ENCODE measurements at regions of chr2 and their contacts with region 1.

Region 1: DNA sequence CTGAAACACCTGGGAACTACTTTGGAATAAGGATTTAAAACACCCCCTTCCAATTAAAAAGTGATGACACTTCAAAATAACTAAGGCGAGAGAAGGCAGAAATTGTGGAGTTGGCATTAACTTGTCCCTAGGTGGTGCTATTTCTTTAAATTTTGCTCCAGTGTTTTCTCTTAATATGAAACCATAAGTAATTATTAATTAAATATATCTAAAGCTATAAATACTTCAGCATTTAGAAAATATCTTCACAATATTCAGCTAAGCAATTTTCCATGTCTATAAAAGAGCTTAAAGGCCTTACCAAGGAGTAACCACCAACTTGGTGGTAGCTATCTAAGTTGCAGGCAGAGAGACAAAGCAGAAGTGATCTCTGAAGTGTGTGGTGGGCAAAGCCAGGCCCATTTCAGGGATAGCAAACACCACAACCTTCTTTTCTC is 186.8 kb upstream of the PGAP1 start:
- DNase-seq: no peak
- ATAC-seq: peak; percentile 89
- H3K4me3 ChIP-seq: no peak overlapping the region
- H3K27ac ChIP-seq: no peak overlapping the region
- H3K4me1 ChIP-seq: peaks cover 3% of the 10 kb centered on the region; the same call in 1 of the 2 replicates
- H3K27me3 ChIP-seq: no peaks in the 10 kb centered on the region
- CTCF ChIP-seq: peak; percentile 38 to 62 (median 48)
- EP300 ChIP-seq: no peak
- POLR2A ChIP-seq: no peak
- RAD21 ChIP-seq: peak; percentile 65

Region 2: GRCh38 chr2:196941398-196942078 is 171.8 kb before region 1 on chr2:
- CTCF ChIA-PET with region 1: no interaction called
- POLR2A ChIA-PET with region 1: no interaction called
- RAD21 ChIA-PET with region 1: no interaction called
- SMC1A ChIA-PET with region 1: no interaction called
- in situ Hi-C with region 1: no loop called
- intact Hi-C with region 1: no loop called
- DNase-seq: no peak
- ATAC-seq: no peak
- H3K4me3 ChIP-seq: no peak overlapping the region
- H3K27ac ChIP-seq: no peak overlapping the region
- H3K4me1 ChIP-seq: no peaks in the 10 kb centered on the region; the same call in 1 of the 2 replicates
- H3K27me3 ChIP-seq: no peaks in the 10 kb centered on the region
- CTCF ChIP-seq: no peak
- EP300 ChIP-seq: no peak
- POLR2A ChIP-seq: no peak
- RAD21 ChIP-seq: no peak

Region 3: DNA sequence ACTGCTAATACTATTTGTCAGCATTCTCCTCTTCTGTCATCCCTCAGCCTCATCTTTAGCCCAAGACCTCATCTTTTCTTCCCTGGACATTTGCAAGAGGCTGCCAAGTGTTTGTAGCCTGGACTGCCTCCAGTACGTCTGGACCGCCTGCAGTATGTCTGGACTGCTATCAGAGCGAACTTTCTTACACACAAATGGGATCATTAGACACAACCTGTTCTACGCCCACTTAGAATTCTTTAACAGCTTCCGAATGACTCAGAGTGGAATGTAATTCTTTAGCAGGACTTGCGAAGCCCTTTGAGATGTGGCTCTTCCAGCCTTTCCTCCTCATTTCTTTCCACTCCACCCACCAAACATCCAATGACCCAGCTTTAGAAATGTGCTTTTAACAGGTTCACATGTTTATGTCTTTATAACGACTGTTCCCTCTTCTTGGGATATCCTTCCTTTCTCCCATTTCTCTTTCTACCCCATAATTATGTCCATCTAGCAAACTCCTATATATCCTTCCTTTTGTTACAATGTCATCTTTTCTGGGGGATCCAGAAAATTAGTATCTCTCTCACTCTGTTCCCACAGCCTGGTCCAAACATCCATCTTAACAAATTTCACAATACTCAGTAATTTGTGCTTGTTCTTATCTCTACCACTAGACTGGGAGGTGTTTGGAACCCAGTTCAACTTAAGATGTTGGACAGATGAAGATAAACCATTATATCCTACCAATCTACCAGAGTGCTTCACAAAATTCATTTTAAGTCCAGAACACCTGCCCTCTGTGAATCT is 15.5 kb before region 1 on chr2:
- CTCF ChIA-PET with region 1: interaction called, 12 read pairs
- POLR2A ChIA-PET with region 1: no interaction called
- RAD21 ChIA-PET with region 1: interaction called, 7 read pairs
- SMC1A ChIA-PET with region 1: interaction called, 7 read pairs
- in situ Hi-C with region 1: no loop called
- intact Hi-C with region 1: no loop called
- DNase-seq: no peak
- ATAC-seq: no peak
- H3K4me3 ChIP-seq: no peak overlapping the region
- H3K27ac ChIP-seq: no peak overlapping the region
- H3K4me1 ChIP-seq: no peaks in the 10 kb centered on the region
- H3K27me3 ChIP-seq: no peaks in the 10 kb centered on the region
- CTCF ChIP-seq: no peak
- EP300 ChIP-seq: no peak
- POLR2A ChIP-seq: no peak
- RAD21 ChIP-seq: no peak

Region 4: DNA sequence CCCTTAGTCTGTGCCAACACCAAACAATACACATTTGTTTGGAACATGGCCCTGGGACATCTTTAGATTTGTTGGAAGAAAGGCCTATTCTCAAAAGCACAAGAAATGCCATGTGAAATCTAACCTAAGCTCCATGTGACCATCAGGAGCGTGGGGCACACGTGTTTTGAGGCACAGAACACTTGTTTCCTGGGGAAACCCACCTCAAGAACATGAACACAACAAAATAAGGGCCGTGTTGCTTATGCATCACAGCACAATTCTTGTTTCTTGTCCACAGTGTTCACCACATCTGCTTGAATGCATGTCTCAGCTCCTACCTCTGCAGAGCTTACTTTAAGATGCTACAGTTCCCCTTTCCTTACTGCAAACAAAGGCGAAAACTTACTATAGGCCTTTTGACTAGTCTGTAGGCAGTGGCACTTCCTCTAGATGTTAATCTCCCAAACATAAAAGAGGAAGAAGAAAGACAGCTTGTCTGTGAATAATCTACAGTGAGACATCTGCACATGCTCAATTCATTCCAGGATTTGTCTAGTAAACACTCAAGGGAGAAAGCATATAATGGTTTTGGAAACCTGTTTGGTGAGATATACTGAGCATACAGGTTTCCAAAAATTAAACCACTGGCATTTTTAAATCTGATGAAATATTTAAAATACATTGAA is 32.3 kb after region 1 on chr2:
- CTCF ChIA-PET with region 1: interaction called, 17 read pairs
- POLR2A ChIA-PET with region 1: interaction called, 5 read pairs
- RAD21 ChIA-PET with region 1: interaction called, 23 read pairs
- SMC1A ChIA-PET with region 1: interaction called, 24 read pairs
- in situ Hi-C with region 1: no loop called
- intact Hi-C with region 1: no loop called
- DNase-seq: peak; percentile 89
- ATAC-seq: peak; percentile 95
- H3K4me3 ChIP-seq: no peak overlapping the region
- H3K27ac ChIP-seq: peak overlapping the region; percentile 32
- H3K4me1 ChIP-seq: peaks cover 42% of the 10 kb centered on the region
- H3K27me3 ChIP-seq: no peaks in the 10 kb centered on the region
- CTCF ChIP-seq: no peak
- EP300 ChIP-seq: peak; percentile 31 to 69; a peak in 1 of 4 replicates
- POLR2A ChIP-seq: peak; percentile 51; the same call in 1 of the 2 replicates
- RAD21 ChIP-seq: 0 out of 2 replicates have a peak, but pooled peaks have one; percentile 1

Region 5: GRCh38 chr2:197168705-197169104 is 55.4 kb after region 1 on chr2:
- CTCF ChIA-PET with region 1: interaction called, 398 read pairs
- POLR2A ChIA-PET with region 1: interaction called, 14 read pairs
- RAD21 ChIA-PET with region 1: interaction called, 207 read pairs
- SMC1A ChIA-PET with region 1: interaction called, 478 read pairs
- in situ Hi-C with region 1: no loop called
- intact Hi-C with region 1: loop called (anchors 1 kb)
- DNase-seq: no peak
- ATAC-seq: peak; percentile 99
- H3K4me3 ChIP-seq: no peak overlapping the region
- H3K27ac ChIP-seq: no peak overlapping the region
- H3K4me1 ChIP-seq: peaks cover 10% of the 10 kb centered on the region
- H3K27me3 ChIP-seq: no peaks in the 10 kb centered on the region
- CTCF ChIP-seq: peak; percentile 68 to 76 (median 74)
- EP300 ChIP-seq: no peak
- POLR2A ChIP-seq: no peak
- RAD21 ChIP-seq: peak; percentile 82

Region 6: GRCh38 chr2:197191177-197191939 is 78.1 kb after region 1 on chr2:
- CTCF ChIA-PET with region 1: interaction called, 58 read pairs
- POLR2A ChIA-PET with region 1: no interaction called
- RAD21 ChIA-PET with region 1: interaction called, 42 read pairs
- SMC1A ChIA-PET with region 1: interaction called, 45 read pairs
- in situ Hi-C with region 1: no loop called
- intact Hi-C with region 1: no loop called
- DNase-seq: no peak
- ATAC-seq: peak; percentile 81
- H3K4me3 ChIP-seq: no peak overlapping the region
- H3K27ac ChIP-seq: peak overlapping the region; percentile 17; the same call in 1 of the 2 replicates
- H3K4me1 ChIP-seq: peaks cover 16% of the 10 kb centered on the region; the same call in 1 of the 2 replicates
- H3K27me3 ChIP-seq: no peaks in the 10 kb centered on the region
- CTCF ChIP-seq: peak; percentile 57 to 69 (median 61)
- EP300 ChIP-seq: no peak
- POLR2A ChIP-seq: no peak
- RAD21 ChIP-seq: peak; percentile 91

Region 7: DNA sequence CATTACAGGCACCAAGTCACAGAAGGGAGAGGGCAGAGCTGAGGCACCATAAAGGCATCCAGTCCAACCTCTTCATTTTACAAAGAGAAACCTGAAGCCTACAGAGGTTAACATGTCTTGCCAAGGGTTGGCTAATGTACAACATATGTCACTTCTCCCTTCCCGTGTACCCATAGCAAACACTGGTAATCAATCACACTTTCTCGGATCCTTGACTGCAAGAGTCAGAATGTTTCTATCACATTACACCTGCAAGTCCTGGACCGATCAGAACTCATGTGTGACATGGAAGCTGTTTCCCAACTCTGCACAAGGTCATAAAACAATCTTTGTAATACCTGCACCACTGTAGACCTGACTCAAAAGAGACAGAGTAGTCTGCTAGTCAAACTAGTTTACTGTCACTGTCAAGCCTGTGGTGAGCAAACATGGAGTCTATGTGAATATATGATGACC is 191.3 kb after region 1 on chr2:
- CTCF ChIA-PET with region 1: interaction called, 21 read pairs
- POLR2A ChIA-PET with region 1: interaction called, 4 read pairs
- RAD21 ChIA-PET with region 1: interaction called, 47 read pairs
- SMC1A ChIA-PET with region 1: interaction called, 54 read pairs
- in situ Hi-C with region 1: no loop called
- intact Hi-C with region 1: no loop called
- DNase-seq: no peak
- ATAC-seq: peak; percentile 43
- H3K4me3 ChIP-seq: peak overlapping the region; percentile 67
- H3K27ac ChIP-seq: peak overlapping the region; percentile 99
- H3K4me1 ChIP-seq: peaks cover 62% of the 10 kb centered on the region
- H3K27me3 ChIP-seq: no peaks in the 10 kb centered on the region
- CTCF ChIP-seq: no peak
- EP300 ChIP-seq: no peak
- POLR2A ChIP-seq: peak; percentile 34; the same call in 1 of the 2 replicates
- RAD21 ChIP-seq: no peak

Region 8: DNA sequence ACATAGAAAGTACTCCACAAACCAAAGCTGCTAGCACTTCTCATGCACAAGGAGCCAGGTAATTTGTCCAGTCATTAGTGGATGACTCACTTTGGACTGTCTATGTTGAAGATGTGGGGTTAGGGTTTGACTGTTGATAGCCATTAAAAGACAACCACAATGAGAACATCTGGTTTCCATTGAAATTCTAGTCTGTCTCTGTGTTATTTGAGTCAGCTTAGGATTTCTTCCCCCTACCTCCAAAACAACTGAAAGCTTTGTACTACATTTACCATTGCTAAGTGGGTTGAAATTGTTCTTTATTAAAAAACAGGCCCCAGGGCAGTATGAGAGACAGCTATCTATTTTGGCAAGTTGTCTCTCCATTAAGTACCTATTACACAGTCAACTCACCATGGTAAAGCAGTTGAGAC is 247.5 kb after region 1 on chr2:
- CTCF ChIA-PET with region 1: interaction called, 12 read pairs
- POLR2A ChIA-PET with region 1: no interaction called
- RAD21 ChIA-PET with region 1: interaction called, 3 read pairs
- SMC1A ChIA-PET with region 1: interaction called, 14 read pairs
- in situ Hi-C with region 1: no loop called
- intact Hi-C with region 1: no loop called
- DNase-seq: no peak
- ATAC-seq: peak; percentile 89
- H3K4me3 ChIP-seq: no peak overlapping the region
- H3K27ac ChIP-seq: no peak overlapping the region
- H3K4me1 ChIP-seq: no peaks in the 10 kb centered on the region
- H3K27me3 ChIP-seq: no peaks in the 10 kb centered on the region
- CTCF ChIP-seq: no peak
- EP300 ChIP-seq: peak in 1 of 2 experiments; percentile 38; a peak in 1 of 4 replicates
- POLR2A ChIP-seq: no peak
- RAD21 ChIP-seq: no peak

Region 9: DNA sequence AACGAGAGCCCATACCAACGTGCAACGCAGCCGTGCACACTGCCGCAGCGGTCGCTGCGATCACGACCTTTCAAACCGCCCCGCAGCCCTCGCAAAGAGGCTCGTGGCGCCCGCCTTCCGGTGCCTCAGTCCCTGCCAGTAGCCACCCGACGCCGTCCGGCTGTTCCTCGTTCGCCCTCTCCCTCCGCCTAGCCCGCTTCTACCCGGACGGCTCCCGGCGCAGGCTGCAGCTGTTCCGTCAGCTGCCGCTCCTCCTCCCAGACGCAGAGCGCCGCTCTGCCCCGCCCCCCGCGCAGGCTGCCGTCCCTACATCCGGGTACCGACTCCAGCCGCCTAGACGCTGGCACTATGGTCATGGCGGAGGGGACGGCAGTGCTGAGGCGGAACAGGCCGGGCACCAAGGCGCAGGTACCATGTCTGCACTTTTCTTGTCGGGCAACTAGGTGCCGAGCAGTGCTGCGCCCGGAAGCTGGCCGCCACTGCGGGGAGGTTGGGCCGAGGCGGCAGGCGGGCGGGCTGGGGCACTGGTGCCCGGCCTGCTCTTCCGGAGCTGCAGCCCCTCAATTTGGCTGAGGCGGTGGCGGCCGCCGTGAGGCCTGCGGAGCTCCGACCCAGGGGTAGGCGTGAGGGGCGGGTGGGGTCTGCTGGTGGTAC is 402.6 kb after region 1 on chr2 and contains the start of gene MOB4:
- CTCF ChIA-PET with region 1: no interaction called
- POLR2A ChIA-PET with region 1: no interaction called
- RAD21 ChIA-PET with region 1: no interaction called
- SMC1A ChIA-PET with region 1: no interaction called
- in situ Hi-C with region 1: no loop called
- intact Hi-C with region 1: no loop called
- DNase-seq: peak; percentile 82
- ATAC-seq: peak; percentile 95
- H3K4me3 ChIP-seq: peak within 1 kb of the TSS; percentile 99
- H3K27ac ChIP-seq: peak within 1 kb of the TSS; percentile 95
- H3K4me1 ChIP-seq: peaks cover 7% of the 10 kb centered on the region
- H3K27me3 ChIP-seq: no peaks in the 10 kb centered on the region
- CTCF ChIP-seq: no peak
- EP300 ChIP-seq: peak in 1 of 2 experiments; percentile 99; a peak in 2 of 4 replicates
- POLR2A ChIP-seq: peak; percentile 98
- RAD21 ChIP-seq: no peak
- polyA plus RNA-seq, gene MOB4: 40.6 to 43.4 TPM

Measured in GM12878 (cell line).